Caco-2 (cell line): ENCODE measurements at regions of chr6 and their contacts with region 1.

Region 1: GRCh38 chr6:84867521-84867920 is 103.1 kb upstream of the TBX18 start:
- DNase-seq: no peak
- H3K4me3 ChIP-seq: no peak overlapping the region
- H3K4me3 Mint-ChIP-seq: no peak overlapping the region
- H3K27ac Mint-ChIP-seq: no peak overlapping the region
- H3K4me1 ChIP-seq: no peaks in the 10 kb centered on the region
- H3K4me1 Mint-ChIP-seq: no peaks in the 10 kb centered on the region
- H3K27me3 ChIP-seq: no peaks in the 10 kb centered on the region
- H3K27me3 Mint-ChIP-seq: no peaks in the 10 kb centered on the region
- CTCF ChIP-seq: no peak

Region 2: GRCh38 chr6:84501315-84501714 is 366.2 kb before region 1 on chr6:
- CTCF ChIA-PET with region 1: no interaction called
- POLR2A ChIA-PET with region 1: no interaction called
- intact Hi-C with region 1: loop called (anchors 5 kb)
- DNase-seq: no peak
- H3K4me3 ChIP-seq: no peak overlapping the region
- H3K4me3 Mint-ChIP-seq: no peak overlapping the region
- H3K27ac Mint-ChIP-seq: no peak overlapping the region
- H3K4me1 ChIP-seq: no peaks in the 10 kb centered on the region
- H3K4me1 Mint-ChIP-seq: no peaks in the 10 kb centered on the region
- H3K27me3 ChIP-seq: no peaks in the 10 kb centered on the region
- H3K27me3 Mint-ChIP-seq: no peaks in the 10 kb centered on the region
- CTCF ChIP-seq: no peak